Ascending aorta (tissue), 2 donors: ENCODE measurements at regions of chr15 and their contacts with region 1.

Region 1: DNA sequence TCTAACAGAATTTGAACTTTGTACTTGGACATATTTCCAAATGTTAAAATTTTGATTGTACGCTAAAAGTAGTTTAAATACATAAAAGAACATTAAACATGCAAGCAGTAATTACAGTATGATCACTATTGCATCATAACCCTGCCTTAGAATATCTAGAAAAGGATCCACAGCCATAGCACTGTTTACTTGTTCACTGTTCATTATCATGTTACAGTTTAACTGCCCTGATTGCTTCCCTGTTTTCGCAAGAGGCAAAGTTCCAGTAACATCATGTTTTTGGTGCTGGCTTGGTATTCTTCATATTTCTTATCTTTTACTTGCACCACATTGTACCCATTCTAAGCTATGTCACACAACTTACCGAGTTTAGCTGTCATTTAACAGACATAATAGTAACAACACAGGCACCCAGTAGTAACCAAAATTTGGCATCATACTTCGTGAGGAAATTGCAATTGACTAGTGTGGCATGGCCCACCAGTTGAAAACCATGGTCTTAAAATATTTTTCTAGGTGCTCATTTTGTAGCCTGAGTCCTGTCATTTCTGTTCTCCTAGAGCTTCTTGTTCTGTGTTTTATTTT is 13.3 kb upstream of the TMEM87A start:
- DNase-seq: no peak
- H3K4me3 ChIP-seq: no peak overlapping the region
- H3K27ac ChIP-seq: no peak overlapping the region
- H3K4me1 ChIP-seq: no peaks in the 10 kb centered on the region
- H3K27me3 ChIP-seq: no peaks in the 10 kb centered on the region
- CTCF ChIP-seq: no peak

Region 2: GRCh38 chr15:41512940-41513510 is 773.5 kb before region 1 on chr15:
- intact Hi-C with region 1: loop called (anchors 10 kb)
- DNase-seq: no peak
- H3K4me3 ChIP-seq: peak overlapping the region; percentile 39 to 53
- H3K27ac ChIP-seq: no peak overlapping the region
- H3K4me1 ChIP-seq: peaks cover 4 to 17% of the 10 kb centered on the region in 2 donors
- H3K27me3 ChIP-seq: peaks cover 17% of the 10 kb centered on the region
- CTCF ChIP-seq: no peak

Region 3: GRCh38 chr15:42084460-42085235 is 201.9 kb before region 1 on chr15:
- intact Hi-C with region 1: no loop called
- DNase-seq: peak in 1 of 2 donors; percentile 76
- H3K4me3 ChIP-seq: no peak overlapping the region
- H3K27ac ChIP-seq: no peak overlapping the region
- H3K4me1 ChIP-seq: no peaks in the 10 kb centered on the region
- H3K27me3 ChIP-seq: no peaks in the 10 kb centered on the region
- CTCF ChIP-seq: peak; percentile 82 to 92 (median 92)

Region 4: GRCh38 chr15:42157981-42158765 is 128.4 kb before region 1 on chr15:
- intact Hi-C with region 1: no loop called
- DNase-seq: peak in 1 of 2 donors; percentile 62
- H3K4me3 ChIP-seq: no peak overlapping the region
- H3K27ac ChIP-seq: no peak overlapping the region
- H3K4me1 ChIP-seq: no peaks in the 10 kb centered on the region
- H3K27me3 ChIP-seq: no peaks in the 10 kb centered on the region
- CTCF ChIP-seq: no peak

Region 5: GRCh38 chr15:42273102-42273899 is 13.2 kb before region 1 on chr15 and contains the starts of genes GANC and TMEM87A:
- intact Hi-C with region 1: no loop called
- DNase-seq: peak; percentile 93 to 99
- H3K4me3 ChIP-seq: peak within 1 kb of the TSS; percentile 74 to 89
- H3K27ac ChIP-seq: peak within 1 kb of the TSS; percentile 99 to 100
- H3K4me1 ChIP-seq: peaks cover 9 to 40% of the 10 kb centered on the region in 2 donors
- H3K27me3 ChIP-seq: no peaks in the 10 kb centered on the region
- CTCF ChIP-seq: no peak
- total RNA-seq, gene GANC: 22.9 TPM
- total RNA-seq, gene TMEM87A: 25.4 TPM

Region 6: DNA sequence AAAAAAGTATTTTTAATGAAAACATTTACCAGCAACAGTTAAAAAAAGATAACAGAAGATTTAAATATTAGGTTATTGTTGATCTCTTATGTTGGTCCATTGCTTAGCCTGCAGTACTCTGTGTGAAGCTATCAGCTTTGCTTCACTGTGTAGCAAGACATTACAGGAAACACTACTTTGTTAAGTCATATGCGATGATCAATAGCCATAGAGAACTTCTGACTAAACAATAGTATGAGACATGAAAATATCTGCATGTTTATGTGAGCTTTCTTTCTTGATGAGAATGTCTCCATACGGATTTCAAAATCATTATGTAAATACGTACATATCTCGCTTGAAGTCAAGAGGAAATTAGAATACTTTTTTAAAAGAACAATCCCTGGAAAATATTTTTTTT is 45.8 kb after region 1 on chr15:
- intact Hi-C with region 1: no loop called
- DNase-seq: no peak
- H3K4me3 ChIP-seq: no peak overlapping the region
- H3K27ac ChIP-seq: no peak overlapping the region
- H3K4me1 ChIP-seq: no peaks in the 10 kb centered on the region
- H3K27me3 ChIP-seq: no peaks in the 10 kb centered on the region
- CTCF ChIP-seq: no peak